Activated CD8-positive, alpha-beta memory T cell treated with anti-CD3 and anti-CD28 coated beads, Interleukin-2, amount 10 ng/mL, durations not matched to agents 7 days and 5 days (primary cell): ENCODE measurements at regions of chr22 and their contacts with region 1.

Region 1: DNA sequence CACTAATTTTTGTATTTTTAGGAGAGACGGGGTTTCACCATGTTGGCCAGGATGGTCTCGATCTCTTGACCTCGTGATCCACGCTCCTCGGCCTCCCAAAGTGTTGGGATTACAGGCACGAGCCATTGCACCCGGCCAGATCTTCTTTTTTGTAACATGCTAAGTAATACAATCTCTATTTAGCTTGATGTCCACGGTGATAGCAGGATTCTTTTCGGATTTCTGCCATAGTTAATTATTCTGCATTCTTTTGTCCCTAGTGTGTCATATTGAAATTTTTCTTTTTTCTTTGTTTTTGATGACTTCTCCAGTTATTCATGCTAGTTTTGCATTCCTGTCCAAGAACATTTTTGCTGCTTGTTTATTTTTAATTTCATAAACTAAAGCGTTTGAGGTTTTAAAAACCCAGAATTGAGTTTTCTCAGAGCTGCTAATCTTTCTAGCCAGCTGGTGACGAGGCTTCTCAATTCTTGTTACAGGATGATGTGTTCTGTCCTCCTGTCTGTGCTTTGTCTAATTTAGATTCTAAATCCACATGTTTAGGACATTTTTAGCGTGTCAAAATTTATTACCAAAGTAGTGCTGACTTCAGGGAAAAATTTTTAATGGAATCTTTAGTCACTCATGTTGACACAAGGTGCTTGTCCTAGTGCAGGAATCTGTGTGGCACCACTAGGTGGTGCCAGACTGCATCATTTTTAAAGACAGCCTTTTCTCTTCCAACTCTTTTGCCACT is 21.8 kb downstream of the NF2 start:
- DNase-seq: peak; percentile 52
- ATAC-seq: peak; percentile 60
- H3K4me3 Mint-ChIP-seq: no peak overlapping the region
- H3K27ac Mint-ChIP-seq: no peak overlapping the region
- H3K4me1 Mint-ChIP-seq: peaks cover 46% of the 10 kb centered on the region
- H3K27me3 Mint-ChIP-seq: no peaks in the 10 kb centered on the region

Region 2: DNA sequence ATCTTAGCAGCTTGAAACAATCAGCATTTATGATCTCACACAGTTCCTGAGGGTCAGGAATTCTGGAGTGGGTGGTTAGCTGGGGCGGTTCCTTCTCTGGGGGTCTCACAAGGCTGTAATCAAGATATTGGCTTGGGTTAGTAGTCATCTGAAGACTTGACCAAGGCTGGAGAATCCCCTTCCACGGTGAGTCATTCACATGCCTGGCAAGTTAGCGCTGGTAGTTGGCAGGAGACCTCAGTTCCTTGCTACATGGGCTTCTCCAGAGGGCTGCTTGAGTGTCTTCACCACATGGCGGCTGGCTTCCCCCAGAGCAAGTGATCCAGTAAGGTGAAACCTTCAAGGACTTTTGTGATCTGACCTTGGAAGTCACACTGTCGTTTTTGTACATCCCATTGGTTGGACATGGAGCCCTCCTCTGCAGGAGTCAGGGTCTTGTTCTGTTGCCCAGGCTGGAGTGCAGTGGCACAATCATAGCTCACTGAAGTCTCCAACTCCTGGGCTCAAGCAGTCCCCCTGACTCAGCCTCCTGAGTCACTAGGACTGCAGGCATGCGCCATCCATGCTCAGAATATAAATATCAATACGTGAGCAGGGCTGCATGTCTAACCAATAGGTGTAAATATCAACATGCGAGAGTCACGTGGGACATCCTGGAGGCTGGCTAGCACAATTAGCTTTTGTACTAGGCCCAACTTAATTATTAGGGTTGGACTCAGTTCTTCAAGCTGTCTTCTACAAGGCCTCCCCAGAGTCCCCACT is 37.1 kb before region 1 on chr22:
- CTCF ChIA-PET with region 1: interaction called, 11 read pairs
- DNase-seq: no peak
- ATAC-seq: no peak
- H3K4me3 Mint-ChIP-seq: no peak overlapping the region
- H3K27ac Mint-ChIP-seq: no peak overlapping the region
- H3K4me1 Mint-ChIP-seq: peaks cover 9% of the 10 kb centered on the region
- H3K27me3 Mint-ChIP-seq: no peaks in the 10 kb centered on the region

Region 3: GRCh38 chr22:29603358-29604075 is 21.7 kb before region 1 on chr22 and contains the start of gene NF2:
- CTCF ChIA-PET with region 1: interaction called, 24 read pairs
- DNase-seq: peak; percentile 99
- ATAC-seq: peak; percentile 98
- H3K4me3 Mint-ChIP-seq: peak within 1 kb of the TSS; percentile 85
- H3K27ac Mint-ChIP-seq: peak within 1 kb of the TSS; percentile 97
- H3K4me1 Mint-ChIP-seq: peaks cover 28% of the 10 kb centered on the region
- H3K27me3 Mint-ChIP-seq: no peaks in the 10 kb centered on the region
- total RNA-seq, gene NF2: 46.6 to 61.2 TPM

Region 4: GRCh38 chr22:29635734-29636357 is 10.6 kb after region 1 on chr22:
- CTCF ChIA-PET with region 1: interaction called, 61 read pairs
- DNase-seq: no peak
- ATAC-seq: peak; percentile 45
- H3K4me3 Mint-ChIP-seq: no peak overlapping the region
- H3K27ac Mint-ChIP-seq: no peak overlapping the region
- H3K4me1 Mint-ChIP-seq: peaks cover 26% of the 10 kb centered on the region
- H3K27me3 Mint-ChIP-seq: no peaks in the 10 kb centered on the region